ENCODE measurements at regions of chr5 and their contacts with region 1.

Region 1: GRCh38 chr5:133423618-133424282 is 188.6 kb downstream of the FSTL4 start:
- DNase-seq: peak; percentile 86
- ATAC-seq: peak; percentile 89

Region 2: DNA sequence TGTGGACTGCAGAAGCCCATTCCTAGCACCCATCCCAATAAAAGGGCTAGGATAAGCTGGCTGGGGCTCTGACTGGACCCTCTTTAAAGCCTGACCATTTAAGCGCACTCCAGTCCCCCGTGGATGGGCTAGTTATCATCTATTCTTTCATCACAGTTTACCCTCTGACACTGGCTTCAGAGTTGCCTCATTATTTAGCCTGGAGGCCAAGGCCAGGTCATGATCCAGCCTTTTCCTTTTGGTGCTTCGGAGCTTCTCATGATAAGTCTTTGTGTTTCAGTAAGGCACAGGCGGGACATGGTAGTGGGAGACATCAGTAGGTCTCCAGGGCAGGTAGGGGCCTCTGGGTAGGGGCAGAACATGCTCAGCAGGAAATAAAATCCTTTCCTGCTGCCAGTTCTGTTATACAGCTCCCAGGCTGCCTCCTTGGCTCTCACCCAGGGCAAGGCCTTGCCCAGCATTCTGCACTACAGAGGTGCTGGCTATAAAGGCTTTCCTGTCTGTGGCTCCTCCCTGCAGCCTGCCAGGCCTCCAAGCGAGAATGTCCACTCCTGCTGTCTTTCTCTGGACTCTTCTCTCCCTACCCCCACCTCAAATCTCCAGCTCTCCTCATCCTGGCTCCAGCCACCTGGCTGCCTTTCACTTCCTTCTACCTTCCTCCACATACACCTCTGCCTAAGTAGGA is 59.8 kb after region 1 on chr5:
- intact Hi-C with region 1: loop called (anchors 2 kb)
- DNase-seq: no peak
- ATAC-seq: no peak

Region 3: GRCh38 chr5:133869519-133870335 is 446.0 kb after region 1 on chr5:
- intact Hi-C with region 1: loop called (anchors 10 kb)
- DNase-seq: peak; percentile 70
- ATAC-seq: peak; percentile 86